ENCODE measurements at regions of chr21 and their contacts with region 1.

Region 1: GRCh38 chr21:37700641-37701202 is 215.5 kb downstream of the KCNJ6 start:
- DNase-seq: peak; percentile 79 to 86 (median 82)
- ATAC-seq: peak; percentile 100
- H3K4me3 ChIP-seq: no peak overlapping the region
- H3K27ac ChIP-seq: no peak overlapping the region
- H3K4me1 ChIP-seq: no peaks in the 10 kb centered on the region
- H3K27me3 ChIP-seq: peaks cover 5 to 17% of the 10 kb centered on the region in 2 experiments; a peak in 4 of 5 replicates
- CTCF ChIP-seq: peak; percentile 80 to 91 (median 86)
- EP300 ChIP-seq: no peak
- POLR2A ChIP-seq: no peak
- RAD21 ChIP-seq: peak; percentile 63 to 90

Region 2: DNA sequence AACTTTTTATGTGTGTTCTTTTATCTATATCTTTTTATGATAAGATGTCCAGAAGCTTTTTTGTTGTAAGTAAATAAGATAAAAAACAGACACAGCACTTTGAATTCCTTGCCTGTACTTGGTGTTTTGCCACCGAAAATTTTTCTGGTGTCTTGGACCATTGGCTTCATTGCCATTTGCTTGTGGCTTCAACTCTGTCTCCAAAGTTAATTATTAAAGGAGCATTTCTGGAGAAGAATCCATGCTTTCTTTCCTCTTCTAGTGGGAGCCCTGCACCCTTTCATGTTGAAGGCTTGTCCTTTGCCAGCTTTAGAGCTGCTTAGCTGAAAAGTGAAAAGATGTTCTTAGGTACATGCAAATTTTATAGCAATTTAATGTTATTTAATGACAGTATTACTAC is 221.9 kb before region 1 on chr21:
- CTCF ChIA-PET with region 1: no interaction called
- POLR2A ChIA-PET with region 1: no interaction called
- in situ Hi-C with region 1: no loop called
- intact Hi-C with region 1: no loop called
- DNase-seq: no peak
- ATAC-seq: no peak
- H3K4me3 ChIP-seq: no peak overlapping the region
- H3K27ac ChIP-seq: no peak overlapping the region
- H3K4me1 ChIP-seq: no peaks in the 10 kb centered on the region
- H3K27me3 ChIP-seq: no peaks in the 10 kb centered on the region
- CTCF ChIP-seq: no peak
- EP300 ChIP-seq: no peak
- POLR2A ChIP-seq: no peak
- RAD21 ChIP-seq: no peak

Region 3: GRCh38 chr21:38159355-38159754 is 458.6 kb after region 1 on chr21:
- CTCF ChIA-PET with region 1: interaction called, 3 read pairs
- POLR2A ChIA-PET with region 1: no interaction called
- in situ Hi-C with region 1: loop called (anchors 25 kb)
- intact Hi-C with region 1: no loop called
- DNase-seq: peak; percentile 83 to 88 (median 86)
- ATAC-seq: peak; percentile 96
- H3K4me3 ChIP-seq: no peak overlapping the region
- H3K27ac ChIP-seq: no peak overlapping the region
- H3K4me1 ChIP-seq: no peaks in the 10 kb centered on the region
- H3K27me3 ChIP-seq: no peaks in the 10 kb centered on the region
- CTCF ChIP-seq: peak; percentile 77 to 89 (median 86)
- EP300 ChIP-seq: no peak
- POLR2A ChIP-seq: no peak
- RAD21 ChIP-seq: peak; percentile 33 to 68; a peak in 3 of 4 replicates